PC-3 (cell line): ENCODE measurements at regions of chr15 and their contacts with region 1.

Region 1: GRCh38 chr15:56098195-56098863 is 104.9 kb upstream of the NEDD4 start:
- DNase-seq: peak; percentile 32
- ATAC-seq: no peak
- H3K4me3 ChIP-seq: no peak overlapping the region
- H3K27ac ChIP-seq: no peak overlapping the region
- H3K4me1 ChIP-seq: no peaks in the 10 kb centered on the region
- H3K27me3 ChIP-seq: no peaks in the 10 kb centered on the region
- CTCF ChIP-seq: peak; percentile 52; the same call in 1 of the 2 replicates

Region 2: DNA sequence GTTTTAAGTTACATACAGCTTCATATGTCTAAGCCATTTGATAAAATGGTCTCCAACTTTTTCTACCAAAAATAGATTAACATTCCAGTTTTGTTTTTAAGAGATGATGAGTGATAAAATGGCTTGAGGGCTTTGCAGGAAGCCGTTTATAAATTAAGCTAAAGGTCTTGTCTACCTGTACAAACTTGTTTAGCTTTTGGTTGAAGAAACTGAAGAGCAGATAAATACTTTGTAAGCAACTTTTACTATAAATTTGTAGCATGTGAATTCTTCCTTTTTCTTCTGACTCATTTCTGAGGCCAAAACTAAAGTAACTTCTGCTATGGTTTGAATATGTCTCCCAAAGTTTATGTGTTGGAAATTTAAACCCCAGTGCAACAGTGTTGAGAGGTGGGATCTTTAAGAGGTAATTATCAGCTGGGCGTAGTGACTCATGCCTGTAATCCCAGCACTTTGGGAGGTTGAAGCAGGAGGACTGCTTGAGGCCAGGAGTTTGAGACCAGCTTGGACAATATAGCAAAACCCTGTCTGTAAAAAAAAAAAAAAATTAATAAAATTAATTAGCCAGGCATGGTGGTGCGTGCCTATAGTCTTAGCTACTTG is 96.8 kb before region 1 on chr15:
- CTCF ChIA-PET with region 1: no interaction called
- POLR2A ChIA-PET with region 1: interaction called, 14 read pairs
- intact Hi-C with region 1: no loop called
- DNase-seq: peak; percentile 30
- ATAC-seq: no peak
- H3K4me3 ChIP-seq: no peak overlapping the region
- H3K27ac ChIP-seq: no peak overlapping the region
- H3K4me1 ChIP-seq: peaks cover 33% of the 10 kb centered on the region
- H3K27me3 ChIP-seq: no peaks in the 10 kb centered on the region
- CTCF ChIP-seq: no peak

Region 3: GRCh38 chr15:56064152-56064551 is 34.2 kb before region 1 on chr15:
- CTCF ChIA-PET with region 1: no interaction called
- POLR2A ChIA-PET with region 1: no interaction called
- intact Hi-C with region 1: loop called (anchors 5 kb)
- DNase-seq: peak; percentile 73
- ATAC-seq: peak; percentile 97
- H3K4me3 ChIP-seq: no peak overlapping the region
- H3K27ac ChIP-seq: peak overlapping the region; percentile 38; the same call in 1 of the 2 replicates
- H3K4me1 ChIP-seq: peaks cover 26% of the 10 kb centered on the region
- H3K27me3 ChIP-seq: no peaks in the 10 kb centered on the region
- CTCF ChIP-seq: no peak

Region 4: GRCh38 chr15:56207092-56207491 is 108.8 kb after region 1 on chr15:
- CTCF ChIA-PET with region 1: no interaction called
- POLR2A ChIA-PET with region 1: no interaction called
- intact Hi-C with region 1: no loop called
- DNase-seq: no peak
- ATAC-seq: no peak
- H3K4me3 ChIP-seq: no peak overlapping the region
- H3K27ac ChIP-seq: no peak overlapping the region
- H3K4me1 ChIP-seq: no peaks in the 10 kb centered on the region
- H3K27me3 ChIP-seq: no peaks in the 10 kb centered on the region
- CTCF ChIP-seq: no peak